HEK293T (cell line): ENCODE measurements at regions of chr2 and their contacts with region 1.

Region 1: GRCh38 chr2:27380626-27381545 is at the start of gene ZNF513:
- DNase-seq: peak; percentile 91

Region 2: GRCh38 chr2:27370026-27370815 is 10.7 kb before region 1 on chr2 and contains the starts of genes EIF2B4 and SNX17:
- CTCF ChIA-PET with region 1: interaction called, 3 read pairs
- POLR2A ChIA-PET with region 1: interaction called, 14 read pairs
- DNase-seq: peak; percentile 93

Region 3: DNA sequence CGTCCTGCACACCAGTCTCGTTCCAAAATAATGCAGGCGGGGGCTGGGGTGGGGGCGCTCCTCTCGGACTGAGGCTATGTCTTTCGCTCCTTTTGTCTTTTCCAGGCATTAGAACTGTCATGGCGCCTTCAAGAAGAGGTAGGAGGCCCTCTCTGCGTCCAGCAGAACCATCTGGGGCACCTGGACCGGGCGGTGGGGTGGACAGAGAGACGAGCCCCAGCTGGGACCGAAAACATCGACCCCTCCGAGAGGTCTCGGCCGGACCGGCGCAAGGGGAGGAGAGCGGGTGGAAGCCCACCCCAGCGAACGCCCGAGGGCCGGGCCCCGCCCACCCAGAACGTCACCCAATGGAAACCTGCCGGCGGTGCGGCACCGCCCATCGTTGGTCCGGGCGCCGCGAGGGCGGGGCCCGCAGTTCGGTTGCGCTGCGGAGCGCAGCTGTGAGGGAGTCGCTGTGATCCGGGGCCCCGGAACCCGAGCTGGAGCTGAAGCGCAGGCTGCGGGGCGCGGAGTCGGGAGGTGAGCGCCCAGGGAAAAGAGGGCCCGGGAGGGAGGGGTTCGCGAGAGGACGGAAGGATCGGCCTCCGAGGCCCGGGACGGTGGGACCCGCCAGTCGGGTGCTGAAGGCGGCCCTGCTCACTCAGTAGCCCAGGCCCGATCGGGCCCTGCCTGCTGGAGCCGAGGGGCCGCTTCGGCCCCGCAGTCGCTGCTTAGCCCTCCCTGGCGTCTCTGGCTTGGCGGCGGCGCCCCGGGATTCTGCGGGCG is 47.5 kb after region 1 on chr2 and contains the start of gene NRBP1:
- CTCF ChIA-PET with region 1: no interaction called
- POLR2A ChIA-PET with region 1: interaction called, 20 read pairs
- DNase-seq: peak; percentile 93

Region 4: GRCh38 chr2:28025123-28025522 is 644.2 kb after region 1 on chr2:
- CTCF ChIA-PET with region 1: no interaction called
- POLR2A ChIA-PET with region 1: no interaction called
- DNase-seq: no peak